Mammary epithelial cell (primary cell): ENCODE measurements at regions of chr10 and their contacts with region 1.

Region 1: DNA sequence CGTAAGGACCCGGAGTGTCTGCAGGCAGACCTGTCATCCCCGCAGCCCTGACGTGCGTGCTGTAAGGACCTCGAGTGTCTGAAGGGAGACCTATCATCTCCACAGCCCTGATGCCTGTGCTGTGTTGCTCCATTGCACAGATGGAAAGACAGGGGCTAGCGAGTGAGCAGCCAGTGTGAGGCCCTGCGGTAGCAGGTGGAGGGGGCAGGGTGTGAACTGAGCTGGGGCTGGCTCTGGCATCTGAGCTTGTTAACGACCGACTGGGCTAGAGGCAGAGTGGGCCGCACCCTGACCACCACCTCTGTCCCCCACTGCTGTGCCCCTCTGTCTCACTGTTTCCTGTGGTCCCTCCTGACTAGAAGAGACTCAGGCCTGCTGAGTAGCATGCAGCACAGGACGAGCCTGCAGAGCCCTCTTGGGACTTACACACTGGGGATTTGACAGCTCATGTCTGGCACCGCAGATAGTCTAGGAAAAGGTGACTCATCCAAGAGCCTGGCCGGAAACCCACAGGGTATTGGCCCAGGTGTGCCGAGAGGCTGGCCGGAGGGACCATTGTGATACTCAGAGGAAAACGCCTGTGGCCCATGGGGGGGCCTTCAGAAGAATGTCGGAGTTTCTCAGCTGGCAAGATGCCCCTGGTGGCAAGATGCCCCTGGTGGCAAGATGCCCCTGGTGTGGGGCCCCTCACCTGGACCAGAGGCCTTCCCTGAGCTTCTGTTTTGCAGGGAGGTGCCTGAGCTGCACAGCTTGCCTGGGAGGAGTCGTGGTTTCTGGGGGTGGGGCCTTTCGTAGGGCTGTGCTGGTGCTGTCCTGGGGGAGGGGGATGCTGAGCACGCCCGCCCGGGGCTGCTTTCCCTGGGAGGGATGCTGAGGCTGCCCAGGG is 34.3 kb downstream of the INPP5A start:
- DNase-seq: peak; percentile 94
- H3K4me3 ChIP-seq: peak overlapping the region in 1 of 3 experiments; percentile 49
- H3K27ac ChIP-seq: no peak overlapping the region
- H3K4me1 ChIP-seq: peaks cover 28% of the 10 kb centered on the region
- H3K27me3 ChIP-seq: no peaks in the 10 kb centered on the region
- CTCF ChIP-seq: no peak

Region 2: DNA sequence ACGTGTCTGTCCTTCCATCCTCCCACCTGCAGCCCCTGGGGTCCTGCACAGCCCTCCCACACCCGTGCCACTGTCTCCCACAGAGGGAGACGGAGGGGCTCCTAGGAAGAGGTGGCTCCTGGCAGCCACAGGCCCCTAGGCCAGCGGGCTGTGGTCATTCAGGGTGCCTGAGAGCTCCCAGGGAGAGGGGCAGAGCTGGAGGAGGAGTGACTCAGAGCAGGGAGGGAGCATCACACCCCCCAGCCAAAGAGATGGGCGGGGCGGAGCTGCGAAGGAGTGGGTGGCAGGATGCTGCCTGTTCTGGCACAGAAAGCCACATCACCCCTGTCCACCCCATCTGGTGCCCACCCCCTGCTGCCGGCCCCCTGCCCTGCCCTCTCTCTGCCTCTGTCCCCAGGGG is 314.6 kb before region 1 on chr10:
- CTCF ChIA-PET with region 1: no interaction called
- dilution Hi-C with region 1: no loop called
- in situ Hi-C with region 1: no loop called
- intact Hi-C with region 1: no loop called
- DNase-seq: peak; percentile 33
- H3K4me3 ChIP-seq: no peak overlapping the region
- H3K27ac ChIP-seq: no peak overlapping the region
- H3K4me1 ChIP-seq: peaks cover 4% of the 10 kb centered on the region
- H3K27me3 ChIP-seq: no peaks in the 10 kb centered on the region
- CTCF ChIP-seq: no peak

Region 3: DNA sequence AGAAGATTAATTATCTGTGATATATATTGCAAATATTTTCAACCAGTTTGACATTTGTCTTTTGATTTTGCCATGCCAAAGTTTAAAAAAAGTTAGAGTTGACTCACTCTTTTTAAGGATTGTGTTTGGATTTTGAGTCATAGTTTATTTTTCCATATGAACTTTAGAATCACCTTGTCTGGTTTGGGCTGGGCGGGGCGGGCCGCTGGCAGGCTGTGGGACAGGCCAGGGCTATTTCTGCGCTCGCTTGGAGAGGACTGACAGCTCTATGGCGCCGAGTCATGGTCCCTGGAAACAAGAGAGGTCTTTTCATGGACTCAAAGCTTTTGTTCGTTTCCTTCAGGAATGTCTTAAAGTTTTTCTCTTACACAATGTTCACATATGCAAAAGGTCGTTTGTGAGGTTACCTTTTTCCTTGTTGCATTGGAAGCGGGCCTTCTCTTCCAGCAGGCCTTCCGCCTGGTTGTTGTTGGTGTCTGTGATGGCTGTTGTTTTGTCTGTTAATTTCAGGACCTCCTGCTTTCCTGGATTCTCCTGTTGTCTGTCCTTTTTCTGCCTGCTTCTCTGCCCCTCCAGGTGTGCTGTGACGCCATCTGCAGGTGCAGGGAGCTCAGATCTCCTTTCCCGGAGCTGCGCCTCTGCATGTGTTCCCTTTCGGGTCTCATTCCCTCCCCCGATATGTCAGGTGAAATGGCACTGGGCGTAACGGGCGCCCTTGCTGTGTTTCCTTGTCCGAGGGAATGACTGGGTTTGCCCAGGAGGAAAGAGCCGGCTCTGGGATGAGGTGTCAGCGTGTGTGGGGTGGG is 19.5 kb after region 1 on chr10:
- CTCF ChIA-PET with region 1: no interaction called
- dilution Hi-C with region 1: no loop called
- in situ Hi-C with region 1: no loop called
- intact Hi-C with region 1: loop called (anchors 1 kb)
- DNase-seq: peak; percentile 68
- H3K4me3 ChIP-seq: no peak overlapping the region
- H3K27ac ChIP-seq: no peak overlapping the region
- H3K4me1 ChIP-seq: peaks cover 18% of the 10 kb centered on the region
- H3K27me3 ChIP-seq: no peaks in the 10 kb centered on the region
- CTCF ChIP-seq: peak in 1 of 2 donors; percentile 37